ENCODE measurements at regions of chr6 and their contacts with region 1.

Region 1: GRCh38 chr6:124334359-124334758 is 530.7 kb downstream of the NKAIN2 start:
- DNase-seq: no peak
- H3K4me3 ChIP-seq: no peak overlapping the region
- H3K27ac ChIP-seq: no peak overlapping the region
- H3K4me1 ChIP-seq: no peaks in the 10 kb centered on the region
- H3K27me3 ChIP-seq: no peaks in the 10 kb centered on the region
- CTCF ChIP-seq: no peak
- POLR2A ChIP-seq: no peak

Region 2: DNA sequence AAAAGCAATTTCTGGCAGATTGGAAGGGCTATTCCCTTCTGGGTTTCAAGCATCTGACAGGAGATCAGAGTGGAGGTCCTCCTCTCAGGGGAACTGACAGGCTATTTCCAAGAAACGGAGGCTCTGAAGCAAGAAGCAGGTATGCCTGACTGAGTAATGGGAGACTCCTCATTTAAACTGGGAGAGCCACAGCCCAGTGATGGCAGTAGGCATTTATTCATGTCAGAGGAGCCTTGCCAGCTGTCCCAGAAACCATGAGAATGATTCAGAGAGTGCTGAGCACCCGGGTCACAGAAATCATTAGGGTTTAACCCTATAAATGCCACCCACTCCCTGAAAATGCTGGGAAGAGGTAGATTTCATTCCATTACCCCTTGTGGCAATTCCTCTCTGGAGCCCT is 380.4 kb after region 1 on chr6:
- intact Hi-C with region 1: loop called (anchors 10 kb)
- DNase-seq: no peak
- H3K4me3 ChIP-seq: no peak overlapping the region
- H3K27ac ChIP-seq: no peak overlapping the region
- H3K4me1 ChIP-seq: no peaks in the 10 kb centered on the region
- H3K27me3 ChIP-seq: no peaks in the 10 kb centered on the region
- CTCF ChIP-seq: no peak
- POLR2A ChIP-seq: no peak